ENCODE measurements at regions of chr17 and their contacts with region 1.

Region 1: GRCh38 chr17:51120739-51121617 is at the start of gene SPAG9:
- DNase-seq: peak; percentile 95
- ATAC-seq: peak; percentile 62
- H3K4me3 Mint-ChIP-seq: peak within 1 kb of the TSS; percentile 89
- H3K27ac Mint-ChIP-seq: peak within 1 kb of the TSS; percentile 100
- H3K4me1 Mint-ChIP-seq: peaks cover 51% of the 10 kb centered on the region
- H3K27me3 Mint-ChIP-seq: no peaks in the 10 kb centered on the region
- total RNA-seq, gene SPAG9: 48.0 to 88.2 TPM

Region 2: GRCh38 chr17:50547035-50547735 is 573.8 kb before region 1 on chr17 and contains the start of gene SPATA20:
- CTCF ChIA-PET with region 1: no interaction called
- POLR2A ChIA-PET with region 1: no interaction called
- intact Hi-C with region 1: no loop called
- DNase-seq: peak; percentile 93
- ATAC-seq: peak; percentile 88
- H3K4me3 Mint-ChIP-seq: peak within 1 kb of the TSS; percentile 63
- H3K27ac Mint-ChIP-seq: no peak within 1 kb of the TSS
- H3K4me1 Mint-ChIP-seq: peaks cover 8% of the 10 kb centered on the region
- H3K27me3 Mint-ChIP-seq: peaks cover 7% of the 10 kb centered on the region
- total RNA-seq, gene SPATA20: 9.0 to 10.7 TPM

Region 3: DNA sequence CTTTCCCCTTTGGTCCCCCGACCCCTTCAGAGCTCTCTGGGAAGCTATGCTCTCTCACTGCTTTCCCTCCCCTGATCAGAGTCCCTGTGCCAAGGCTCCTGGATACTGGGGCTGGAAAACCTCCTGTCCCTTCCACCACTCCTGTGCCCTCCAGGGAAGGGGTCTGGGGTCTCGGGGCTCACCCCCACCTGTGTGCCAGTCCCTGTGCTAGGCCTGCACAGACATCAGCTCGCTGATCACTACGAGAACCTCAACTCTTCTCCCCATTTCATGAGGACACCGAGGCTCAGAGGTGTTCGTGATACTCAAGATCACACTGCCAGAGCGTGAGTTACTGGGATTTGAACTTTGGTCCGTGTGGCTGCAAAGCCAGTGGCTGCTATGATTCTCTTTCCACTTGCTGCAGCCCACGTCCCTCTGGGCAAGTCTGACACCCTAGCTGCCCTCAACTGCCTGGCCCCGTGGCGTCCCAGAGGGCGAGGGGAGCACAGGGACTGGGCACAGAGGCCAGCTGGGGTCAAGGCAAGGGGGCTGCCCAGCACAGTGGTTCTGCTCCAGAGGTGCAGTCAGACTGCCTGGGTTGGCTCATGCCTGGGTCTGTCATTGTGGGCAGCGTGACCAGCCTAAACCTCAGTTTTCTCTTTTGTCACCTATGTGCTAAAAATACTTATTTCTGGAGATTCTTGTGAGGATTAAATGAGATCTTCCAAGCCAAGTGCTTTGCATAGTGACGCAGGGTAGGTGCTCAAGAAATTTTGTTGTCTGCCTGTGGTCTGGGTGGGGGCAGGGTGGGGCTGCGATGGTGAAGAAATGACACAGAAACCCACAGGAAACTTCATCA is 211.0 kb before region 1 on chr17:
- CTCF ChIA-PET with region 1: no interaction called
- POLR2A ChIA-PET with region 1: no interaction called
- intact Hi-C with region 1: loop called in 1 of 2 experiments (anchors 5 kb)
- DNase-seq: peak; percentile 91
- ATAC-seq: peak; percentile 88
- H3K4me3 Mint-ChIP-seq: no peak overlapping the region
- H3K27ac Mint-ChIP-seq: peak overlapping the region; percentile 81
- H3K4me1 Mint-ChIP-seq: peaks cover 64% of the 10 kb centered on the region
- H3K27me3 Mint-ChIP-seq: no peaks in the 10 kb centered on the region

Region 4: DNA sequence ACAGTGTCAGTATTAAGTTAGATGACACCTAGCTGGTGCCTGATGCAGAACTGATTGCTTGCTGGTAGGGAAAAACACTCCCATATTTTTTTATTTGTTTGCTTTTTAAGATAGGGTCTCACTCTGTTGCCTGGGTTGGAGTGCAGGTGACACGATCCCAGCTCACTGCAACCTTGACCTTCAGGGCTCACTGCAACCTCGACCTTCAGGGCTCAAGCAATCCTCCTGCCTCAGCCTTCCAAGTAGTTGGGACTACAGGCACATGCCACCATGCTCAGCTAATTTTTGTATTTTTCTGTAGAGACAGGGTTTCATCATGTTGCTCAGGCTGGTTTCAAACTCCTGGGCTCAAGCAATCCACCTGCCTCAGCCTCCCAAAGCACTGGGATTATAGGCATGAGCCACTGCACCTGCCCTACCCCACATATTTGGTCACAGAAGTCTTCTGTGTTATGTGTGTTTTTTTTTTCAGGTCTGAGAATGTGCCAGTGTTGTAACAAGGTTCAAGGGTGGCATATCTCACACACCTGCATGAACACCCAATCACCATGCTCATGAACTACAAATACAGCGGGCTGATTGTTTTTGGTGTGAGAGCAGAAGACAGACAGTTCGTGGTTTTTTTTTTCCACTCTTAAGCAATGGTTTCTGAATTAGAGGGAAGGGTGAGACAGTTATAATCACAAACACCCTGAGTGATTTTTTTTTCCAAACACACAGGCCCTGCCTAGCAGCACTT is 23.1 kb before region 1 on chr17:
- CTCF ChIA-PET with region 1: no interaction called
- POLR2A ChIA-PET with region 1: no interaction called
- intact Hi-C with region 1: loop called in 1 of 2 experiments (anchors 1 kb)
- DNase-seq: no peak
- ATAC-seq: peak; percentile 37
- H3K4me3 Mint-ChIP-seq: no peak overlapping the region
- H3K27ac Mint-ChIP-seq: no peak overlapping the region
- H3K4me1 Mint-ChIP-seq: peaks cover 30% of the 10 kb centered on the region
- H3K27me3 Mint-ChIP-seq: no peaks in the 10 kb centered on the region

Region 5: DNA sequence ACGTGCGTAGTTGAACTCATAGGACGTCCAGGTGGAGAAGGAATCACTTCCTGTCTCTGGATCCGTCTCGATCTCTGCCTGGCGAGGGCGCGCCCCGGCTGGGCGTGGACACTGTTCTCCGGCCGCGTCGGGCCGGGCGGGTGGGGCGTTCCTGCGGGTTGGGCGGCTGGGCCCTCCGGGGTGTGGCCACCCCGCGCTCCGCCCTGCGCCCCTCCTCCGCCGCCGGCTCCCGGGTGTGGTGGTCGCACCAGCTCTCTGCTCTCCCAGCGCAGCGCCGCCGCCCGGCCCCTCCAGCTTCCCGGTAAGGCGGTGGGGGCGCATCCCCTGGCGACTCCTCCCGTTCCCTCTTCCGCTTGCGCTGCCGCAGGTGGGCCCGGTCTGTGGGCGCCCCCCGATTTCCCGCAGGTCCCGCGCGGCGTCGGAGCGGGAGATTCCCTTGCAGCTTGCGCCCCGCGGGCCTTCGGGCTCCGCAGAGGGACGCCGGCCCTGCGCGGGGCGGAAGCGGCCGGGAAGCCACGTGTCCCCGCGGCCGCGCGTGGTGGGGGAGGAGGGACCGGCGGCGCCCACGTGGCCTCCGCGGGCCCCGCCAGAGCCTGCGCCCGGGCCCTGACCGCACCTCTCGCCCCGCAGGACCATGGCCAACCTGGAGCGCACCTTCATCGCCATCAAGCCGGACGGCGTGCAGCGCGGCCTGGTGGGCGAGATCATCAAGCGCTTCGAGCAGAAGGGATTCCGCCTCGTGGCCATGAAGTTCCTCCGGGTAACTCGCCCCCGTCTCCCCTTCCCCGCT is 45.4 kb after region 1 on chr17 and contains the start of gene NME2:
- CTCF ChIA-PET with region 1: interaction called, 3 read pairs
- POLR2A ChIA-PET with region 1: no interaction called
- intact Hi-C with region 1: loop called (anchors 1 to 5 kb)
- DNase-seq: peak; percentile 80
- ATAC-seq: peak; percentile 76
- H3K4me3 Mint-ChIP-seq: peak within 1 kb of the TSS; percentile 79
- H3K27ac Mint-ChIP-seq: peak within 1 kb of the TSS; percentile 95
- H3K4me1 Mint-ChIP-seq: peaks cover 31% of the 10 kb centered on the region
- H3K27me3 Mint-ChIP-seq: no peaks in the 10 kb centered on the region
- total RNA-seq, gene NME2: 703 to 827 TPM